Right cardiac atrium (tissue), 5 donors: ENCODE measurements at regions of chr2 and their contacts with region 1.

Region 1: DNA sequence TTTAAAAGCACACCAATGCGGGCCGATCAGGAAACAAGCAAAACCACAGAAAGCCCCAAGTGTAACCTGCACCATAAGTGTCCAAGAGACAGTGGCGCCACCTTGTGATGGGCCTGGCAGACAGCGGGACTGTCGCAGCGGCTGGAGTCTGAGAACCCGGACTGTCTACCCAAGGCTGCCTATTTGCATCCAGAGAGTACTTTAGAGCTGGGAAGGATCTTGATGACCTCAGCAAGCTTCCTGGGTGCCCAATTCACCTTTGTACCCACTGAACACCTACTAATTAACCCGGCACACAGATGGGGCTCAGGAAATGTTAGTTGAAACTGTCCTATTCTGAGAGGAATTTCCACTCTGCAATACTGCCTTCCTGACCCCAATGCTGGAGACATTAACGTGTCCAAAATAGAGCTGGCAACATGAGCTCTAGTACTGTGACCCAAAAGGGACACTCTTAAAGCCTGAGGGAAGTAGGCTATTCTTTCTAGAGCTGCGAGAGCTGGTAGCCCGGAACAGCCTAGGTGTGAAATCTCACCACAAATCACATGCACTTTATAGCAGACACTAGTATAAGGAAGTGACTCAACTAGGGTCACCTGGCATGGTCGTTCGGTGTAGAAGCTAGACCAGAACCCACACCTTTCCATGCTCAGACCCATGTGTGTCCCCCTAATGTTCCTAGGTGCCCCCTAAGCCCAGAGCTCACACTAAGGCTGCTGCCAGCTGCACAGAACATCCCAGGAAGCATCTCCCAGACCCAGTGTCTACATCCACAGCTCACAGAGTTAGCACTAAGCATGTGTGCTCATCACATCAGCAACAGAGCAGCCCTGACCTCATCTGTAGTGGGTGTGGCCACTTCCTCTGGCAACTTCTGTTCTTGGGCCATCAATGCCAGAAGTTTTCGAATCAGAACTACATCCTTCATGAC is 25.4 kb downstream of the POLR1A start:
- DNase-seq: peak; percentile 79 to 93 (median 92)
- ATAC-seq: peak; percentile 81 to 82
- H3K4me3 ChIP-seq: no peak overlapping the region
- H3K27ac ChIP-seq: no peak overlapping the region
- H3K4me1 ChIP-seq: no peaks in the 10 kb centered on the region
- H3K27me3 ChIP-seq: no peaks in the 10 kb centered on the region

Region 2: DNA sequence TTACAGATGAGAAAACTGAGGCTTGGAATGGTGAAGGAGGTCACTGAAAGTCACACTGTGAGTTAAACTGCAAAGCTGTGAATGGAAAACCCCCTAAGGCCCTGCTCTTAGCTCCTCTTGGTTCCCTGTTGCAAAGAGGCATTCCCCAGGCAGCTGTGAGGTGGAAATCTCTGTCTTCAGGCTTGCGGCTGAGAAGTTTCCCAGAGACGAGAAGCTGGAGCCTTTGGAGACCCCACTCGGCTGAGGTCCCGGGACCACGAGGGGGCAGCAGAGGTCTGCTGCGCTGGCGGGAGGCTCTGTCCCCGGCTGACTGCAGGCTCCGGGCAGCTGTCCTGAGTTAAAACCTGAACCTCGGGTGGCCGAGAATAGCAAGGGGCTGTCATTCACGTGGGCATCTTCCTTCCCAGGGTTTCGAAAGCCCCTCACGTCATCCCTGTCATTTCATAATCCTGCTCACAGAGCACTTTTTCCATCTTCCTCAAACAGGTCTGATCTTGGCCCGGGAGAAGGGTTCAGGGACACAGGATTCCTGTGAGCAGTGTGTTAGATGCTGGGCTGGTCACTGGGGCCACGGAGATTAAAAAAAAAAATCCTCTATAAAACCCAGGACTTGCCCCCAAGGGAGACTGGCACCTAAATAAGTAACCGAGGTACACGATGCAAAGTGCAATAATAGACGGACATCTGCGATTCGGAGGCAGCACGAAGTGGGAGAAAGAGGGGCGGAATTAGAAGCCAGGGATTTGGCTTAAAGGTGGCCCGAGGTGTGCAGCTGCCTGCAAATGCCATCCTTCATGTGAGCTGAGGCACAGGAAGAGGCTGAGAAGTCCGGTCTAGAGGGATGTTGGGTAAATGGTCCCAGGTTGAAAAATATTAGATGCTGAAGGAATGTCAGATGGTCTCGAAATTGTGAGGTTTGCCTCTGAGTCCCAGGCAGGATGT is 351.1 kb before region 1 on chr2:
- intact Hi-C with region 1: loop called in 2 of 4 experiments (anchors 10 kb)
- DNase-seq: peak; percentile 91 to 96 (median 96)
- ATAC-seq: peak; percentile 94 to 96
- H3K4me3 ChIP-seq: no peak overlapping the region
- H3K27ac ChIP-seq: no peak overlapping the region
- H3K4me1 ChIP-seq: no peaks in the 10 kb centered on the region
- H3K27me3 ChIP-seq: no peaks in the 10 kb centered on the region

Region 3: DNA sequence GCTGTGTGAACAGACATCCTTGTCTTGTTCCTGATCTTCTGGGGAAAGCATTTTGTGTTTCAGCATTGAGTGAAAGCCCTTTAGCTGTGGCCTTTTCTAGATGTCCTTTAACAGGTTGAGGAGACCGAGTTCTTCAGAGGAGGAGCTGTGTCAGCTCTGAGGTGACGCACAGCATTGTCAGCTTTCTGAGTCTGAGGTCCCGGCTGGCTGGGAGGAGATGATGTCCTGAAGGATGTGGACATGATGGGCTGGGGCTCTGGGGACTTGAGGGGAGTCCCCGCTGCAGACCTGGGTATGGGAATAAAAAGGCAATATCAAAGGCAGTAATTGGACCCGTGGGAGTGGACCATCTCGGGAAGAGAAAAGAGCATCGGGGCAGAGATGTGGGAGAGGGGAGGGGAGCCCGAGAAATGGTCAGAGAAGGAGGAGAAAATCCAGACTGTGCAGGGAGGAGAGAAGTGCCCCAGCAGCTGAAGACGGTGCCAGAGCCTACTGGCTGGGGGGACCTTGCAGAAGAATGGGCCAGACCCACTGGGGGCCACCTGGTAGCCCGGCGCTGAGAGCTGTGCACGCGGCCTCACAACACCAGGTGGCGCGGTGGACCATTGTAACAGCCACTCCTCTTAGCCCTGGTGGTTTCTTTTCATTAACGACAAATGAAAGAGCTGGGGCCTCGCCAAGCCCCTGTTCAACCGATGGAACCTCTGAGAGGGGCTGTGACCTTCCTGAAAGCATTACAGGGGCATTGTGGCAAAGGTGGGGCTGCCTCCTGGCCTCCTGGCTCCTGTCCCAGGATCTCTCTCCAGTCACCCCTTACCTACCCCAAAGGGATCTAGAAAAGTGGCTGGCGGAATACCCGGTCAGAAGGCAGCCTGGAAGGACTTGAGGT is 253.0 kb before region 1 on chr2:
- intact Hi-C with region 1: loop called (anchors 1 to 5 kb)
- DNase-seq: peak; percentile 79 to 92 (median 90)
- ATAC-seq: peak; percentile 91 to 95
- H3K4me3 ChIP-seq: no peak overlapping the region
- H3K27ac ChIP-seq: no peak overlapping the region
- H3K4me1 ChIP-seq: no peaks in the 10 kb centered on the region
- H3K27me3 ChIP-seq: no peaks in the 10 kb centered on the region

Region 4: DNA sequence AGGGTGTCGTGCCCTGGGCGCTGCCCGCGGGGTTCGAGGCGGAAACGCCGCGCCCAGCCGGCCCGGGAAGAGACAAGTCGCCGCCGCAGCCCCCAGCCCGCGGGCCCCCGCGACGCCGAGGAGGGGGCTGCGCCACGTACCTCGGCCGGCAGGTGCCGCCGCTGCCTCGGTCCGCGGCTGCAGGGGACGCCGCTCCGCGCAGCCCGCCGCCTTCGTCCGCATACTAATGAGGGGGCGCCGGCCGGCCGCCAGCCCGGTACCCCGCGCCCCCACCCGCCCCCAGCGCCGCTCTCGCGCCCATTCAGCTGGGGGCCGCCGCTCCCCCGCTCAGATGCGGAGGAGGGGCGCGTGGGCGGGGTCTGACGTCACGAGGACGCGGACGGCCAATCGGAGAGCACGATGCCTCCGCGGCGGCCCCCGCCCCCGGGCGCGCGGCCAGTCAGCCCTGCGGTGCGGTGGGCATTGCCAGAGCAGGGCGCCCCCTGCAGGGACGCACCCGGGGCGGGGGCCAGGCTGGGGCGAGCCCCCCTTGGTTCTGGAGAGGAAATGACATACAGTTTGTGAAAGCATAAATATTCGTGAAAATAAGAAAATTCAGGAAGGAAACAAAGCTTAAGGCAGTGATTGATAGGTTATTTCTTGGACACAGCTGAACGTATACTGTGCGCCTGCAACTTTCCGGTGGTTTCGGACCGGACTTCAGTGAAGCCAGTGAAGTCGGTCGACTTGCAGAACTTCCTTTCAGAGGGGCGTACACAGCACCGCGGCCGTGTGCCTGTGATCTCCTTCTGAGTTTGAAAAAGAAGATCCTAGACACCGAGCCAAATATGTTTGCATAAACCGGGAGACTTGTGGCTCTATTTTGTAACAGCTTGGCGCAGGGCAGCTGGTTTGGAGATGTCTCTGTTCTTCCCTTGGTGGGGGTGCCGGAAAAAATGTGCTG is 191.3 kb before region 1 on chr2 and contains the start of gene ST3GAL5:
- intact Hi-C with region 1: loop called in 2 of 4 experiments (anchors 2 to 5 kb)
- DNase-seq: peak; percentile 93 to 98 (median 98)
- ATAC-seq: peak; percentile 91
- H3K4me3 ChIP-seq: peak within 1 kb of the TSS; percentile 84
- H3K27ac ChIP-seq: peak within 1 kb of the TSS; percentile 76
- H3K4me1 ChIP-seq: peaks cover 4% of the 10 kb centered on the region
- H3K27me3 ChIP-seq: no peaks in the 10 kb centered on the region
- total RNA-seq, gene ST3GAL5: 8.7 to 14.0 (median 9.7) TPM

Region 5: GRCh38 chr2:85911814-85912692 is 168.2 kb before region 1 on chr2:
- intact Hi-C with region 1: no loop called
- DNase-seq: no peak
- ATAC-seq: peak in 1 of 2 donors; percentile 48
- H3K4me3 ChIP-seq: no peak overlapping the region
- H3K27ac ChIP-seq: peak overlapping the region; percentile 70
- H3K4me1 ChIP-seq: peaks cover 9% of the 10 kb centered on the region
- H3K27me3 ChIP-seq: no peaks in the 10 kb centered on the region

Region 6: GRCh38 chr2:86025229-86025820 is 54.9 kb before region 1 on chr2:
- intact Hi-C with region 1: no loop called
- DNase-seq: peak in 1 of 3 donors; percentile 12
- ATAC-seq: no peak
- H3K4me3 ChIP-seq: no peak overlapping the region
- H3K27ac ChIP-seq: no peak overlapping the region
- H3K4me1 ChIP-seq: peaks cover 15% of the 10 kb centered on the region
- H3K27me3 ChIP-seq: no peaks in the 10 kb centered on the region

Region 7: GRCh38 chr2:86097114-86097896 is 17.1 kb after region 1 on chr2:
- intact Hi-C with region 1: no loop called
- DNase-seq: no peak
- ATAC-seq: no peak
- H3K4me3 ChIP-seq: no peak overlapping the region
- H3K27ac ChIP-seq: no peak overlapping the region
- H3K4me1 ChIP-seq: no peaks in the 10 kb centered on the region
- H3K27me3 ChIP-seq: no peaks in the 10 kb centered on the region

Region 8: GRCh38 chr2:86216577-86217555 is 136.6 kb after region 1 on chr2:
- intact Hi-C with region 1: no loop called
- DNase-seq: no peak
- ATAC-seq: no peak
- H3K4me3 ChIP-seq: no peak overlapping the region
- H3K27ac ChIP-seq: no peak overlapping the region
- H3K4me1 ChIP-seq: peaks cover 4% of the 10 kb centered on the region
- H3K27me3 ChIP-seq: no peaks in the 10 kb centered on the region